SK-N-SH (cell line): ENCODE measurements at regions of chr9 and their contacts with region 1.

Region 1: GRCh38 chr9:129641746-129642513 is at the start of gene ASB6:
- DNase-seq: peak; percentile 99
- H3K4me3 ChIP-seq: peak within 1 kb of the TSS; percentile 99 to 100
- H3K27ac ChIP-seq: peak within 1 kb of the TSS; percentile 64 to 92
- H3K4me1 ChIP-seq: peaks cover 18 to 31% of the 10 kb centered on the region in 2 experiments
- H3K27me3 ChIP-seq: no peaks in the 10 kb centered on the region
- CTCF ChIP-seq: peak; percentile 87
- EP300 ChIP-seq: no peak; a peak in 1 of 4 replicates
- RAD21 ChIP-seq: peak; percentile 94
- polyA plus RNA-seq, gene ASB6: 35.9 and 37.5 TPM in 2 replicates

Region 2: GRCh38 chr9:129131300-129132145 is 510.4 kb before region 1 on chr9:
- CTCF ChIA-PET with region 1: interaction called, 14 read pairs
- POLR2A ChIA-PET with region 1: no interaction called
- DNase-seq: peak; percentile 91
- H3K4me3 ChIP-seq: no peak overlapping the region
- H3K27ac ChIP-seq: no peak overlapping the region
- H3K4me1 ChIP-seq: peaks cover 0 to 11% of the 10 kb centered on the region in 2 experiments; a peak in 1 of 4 replicates
- H3K27me3 ChIP-seq: no peaks in the 10 kb centered on the region
- CTCF ChIP-seq: peak; percentile 97
- EP300 ChIP-seq: no peak
- RAD21 ChIP-seq: peak; percentile 85

Region 3: DNA sequence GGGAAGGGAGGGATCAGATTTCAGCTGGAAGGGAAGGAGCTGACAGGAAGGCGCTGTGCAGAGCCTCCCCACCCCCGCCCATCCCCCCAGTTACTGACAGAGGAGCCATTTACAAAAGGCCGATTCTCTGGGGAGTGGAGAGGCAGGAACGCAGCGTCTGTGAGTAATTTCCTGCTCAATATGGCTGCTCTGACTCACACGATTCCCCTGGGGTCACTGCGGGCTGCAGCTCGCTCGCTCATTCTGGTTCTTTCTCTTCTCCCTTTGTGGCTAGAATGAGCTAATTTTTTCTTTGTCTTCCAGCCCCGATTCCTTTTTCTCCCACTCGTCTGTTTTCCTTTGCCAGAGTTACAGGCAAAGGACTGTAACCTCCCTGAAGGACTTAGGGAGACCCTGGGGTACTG is 501.9 kb before region 1 on chr9:
- CTCF ChIA-PET with region 1: interaction called, 10 read pairs
- POLR2A ChIA-PET with region 1: no interaction called
- DNase-seq: peak; percentile 75
- H3K4me3 ChIP-seq: peak overlapping the region; percentile 50 to 53
- H3K27ac ChIP-seq: peak overlapping the region; percentile 99 to 100
- H3K4me1 ChIP-seq: peaks cover 43 to 55% of the 10 kb centered on the region in 2 experiments; a peak in 3 of 4 replicates
- H3K27me3 ChIP-seq: no peaks in the 10 kb centered on the region
- CTCF ChIP-seq: no peak
- EP300 ChIP-seq: peak; percentile 61 to 96
- RAD21 ChIP-seq: peak; percentile 29

Region 4: DNA sequence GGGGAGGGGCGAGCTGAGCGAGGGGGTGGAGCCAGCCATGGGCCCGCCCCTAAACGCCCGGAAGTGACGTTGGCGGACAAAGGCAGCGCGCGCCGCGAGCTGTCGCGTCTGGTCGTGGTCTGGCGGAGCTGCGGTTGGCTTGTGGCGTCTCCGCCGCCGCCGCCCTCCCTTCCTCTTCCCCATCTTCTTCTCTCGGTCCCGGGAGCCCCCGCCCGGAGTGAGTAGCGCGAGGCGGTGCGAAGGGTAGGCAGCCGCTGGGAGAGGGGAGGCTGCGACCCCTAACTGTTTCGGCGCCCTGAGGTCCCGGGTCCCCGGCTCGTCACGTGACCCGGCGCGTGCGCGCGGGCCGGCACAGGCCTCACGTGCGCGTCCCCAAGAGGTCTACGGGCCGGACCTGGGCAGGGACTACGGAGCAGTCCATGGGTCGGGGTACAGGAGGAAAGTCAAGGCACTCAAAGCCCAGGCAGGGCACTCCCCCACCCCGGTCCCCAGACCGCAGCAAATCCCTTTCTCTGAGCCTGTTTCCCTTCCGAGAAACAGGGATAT is 15.8 kb before region 1 on chr9 and contains the start of gene NTMT1:
- CTCF ChIA-PET with region 1: interaction called, 76 read pairs
- POLR2A ChIA-PET with region 1: interaction called, 15 read pairs
- DNase-seq: peak; percentile 95
- H3K4me3 ChIP-seq: peak within 1 kb of the TSS; percentile 87 to 92
- H3K27ac ChIP-seq: peak within 1 kb of the TSS; percentile 78 to 83
- H3K4me1 ChIP-seq: peaks cover 16 to 29% of the 10 kb centered on the region in 2 experiments; a peak in 2 of 4 replicates
- H3K27me3 ChIP-seq: no peaks in the 10 kb centered on the region
- CTCF ChIP-seq: no peak
- EP300 ChIP-seq: no peak
- RAD21 ChIP-seq: no peak
- polyA plus RNA-seq, gene NTMT1: 75.0 and 78.3 TPM in 2 replicates

Region 5: DNA sequence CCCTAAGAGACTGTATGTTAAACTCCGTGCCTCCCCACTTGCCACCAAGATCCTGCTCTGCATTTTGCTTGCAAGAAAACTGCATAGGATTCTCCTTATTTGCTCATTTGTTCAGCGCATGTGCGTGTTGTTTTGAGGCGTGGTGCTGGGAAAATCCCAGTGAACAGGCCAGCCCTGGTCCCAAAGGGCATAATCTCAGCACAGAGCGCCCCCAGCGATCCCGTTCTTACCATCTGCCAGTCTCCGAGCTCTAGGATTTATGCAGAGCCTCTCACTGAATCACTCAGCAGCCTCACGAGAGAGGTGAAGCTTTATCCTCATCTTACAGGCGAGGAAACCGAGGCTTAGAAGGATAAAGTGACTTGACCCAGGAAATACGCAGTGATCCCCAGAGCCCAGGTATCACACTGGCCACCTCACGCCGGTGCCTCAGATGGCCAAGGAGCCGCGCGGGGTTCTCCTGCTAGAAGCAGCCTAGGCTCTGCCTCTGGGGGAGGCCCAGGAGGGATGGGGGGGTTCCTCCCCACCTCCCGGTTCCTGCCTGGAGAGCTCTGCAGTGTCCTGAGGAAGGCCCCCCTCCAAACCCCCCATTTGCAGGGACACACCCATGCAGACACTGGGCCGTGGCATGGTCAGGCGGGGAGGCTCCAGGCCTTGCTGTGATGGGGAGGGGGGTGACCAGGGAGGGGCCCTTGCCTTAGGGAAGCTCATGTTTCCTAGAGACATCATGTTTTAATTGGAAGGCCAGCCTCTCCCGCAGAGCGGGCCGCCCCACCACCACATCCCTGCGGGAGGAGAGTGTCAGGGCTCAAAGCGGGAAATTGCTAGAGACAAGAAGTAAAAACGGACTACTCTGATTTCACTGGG is 35.3 kb after region 1 on chr9:
- CTCF ChIA-PET with region 1: interaction called, 12 read pairs
- POLR2A ChIA-PET with region 1: interaction called, 3 read pairs
- DNase-seq: peak; percentile 84
- H3K4me3 ChIP-seq: no peak overlapping the region
- H3K27ac ChIP-seq: peak overlapping the region in 1 of 2 experiments; percentile 40; a peak in 2 of 4 replicates
- H3K4me1 ChIP-seq: peaks cover 0 to 42% of the 10 kb centered on the region in 2 experiments; a peak in 2 of 4 replicates
- H3K27me3 ChIP-seq: peaks cover 14% of the 10 kb centered on the region; the same call in 1 of the 2 replicates
- CTCF ChIP-seq: no peak
- EP300 ChIP-seq: no peak
- RAD21 ChIP-seq: no peak

Region 6: DNA sequence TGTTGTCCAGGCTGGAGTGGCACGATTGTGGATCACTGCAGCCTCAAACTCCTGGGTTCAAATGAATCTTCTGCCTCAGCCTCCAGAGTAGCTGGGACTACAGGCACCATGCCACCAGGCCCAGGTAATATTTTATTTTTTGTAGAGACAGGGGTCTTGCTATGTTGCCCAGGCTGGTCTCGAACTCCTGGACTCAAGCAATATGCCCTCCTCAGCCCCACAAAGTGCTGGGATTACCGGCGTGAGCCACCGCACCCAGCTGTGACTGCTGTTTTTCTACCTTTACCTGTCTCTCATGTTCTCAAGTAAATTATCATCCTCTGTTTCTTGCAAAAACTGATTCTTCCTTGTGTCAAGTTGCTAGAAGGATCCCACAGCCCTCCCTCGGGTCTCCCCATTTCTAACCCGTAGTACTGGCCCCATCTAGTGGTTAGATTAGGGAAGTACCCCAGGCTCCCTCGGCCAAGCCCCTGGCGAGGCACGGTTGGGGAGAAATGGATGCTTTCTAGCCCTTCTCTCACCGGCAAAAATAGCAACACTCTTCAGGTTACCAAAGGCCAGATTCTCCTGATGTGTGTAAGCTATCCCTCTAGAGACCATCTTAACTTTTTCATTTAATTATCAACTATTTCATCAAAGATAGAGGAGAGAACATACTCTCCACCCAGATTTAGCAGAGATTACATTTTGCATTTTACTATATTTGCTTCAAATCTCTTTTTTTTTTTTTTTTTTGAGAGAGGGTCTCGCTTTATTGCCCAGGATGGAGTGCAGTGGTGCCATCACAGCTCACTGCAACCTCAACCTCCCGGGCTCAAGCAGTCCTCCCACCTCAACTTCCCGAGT is 141.8 kb after region 1 on chr9:
- CTCF ChIA-PET with region 1: interaction called, 81 read pairs
- POLR2A ChIA-PET with region 1: interaction called, 4 read pairs
- DNase-seq: peak; percentile 91
- H3K4me3 ChIP-seq: no peak overlapping the region
- H3K27ac ChIP-seq: no peak overlapping the region
- H3K4me1 ChIP-seq: no peaks in the 10 kb centered on the region
- H3K27me3 ChIP-seq: no peaks in the 10 kb centered on the region; the same call in 1 of the 2 replicates
- CTCF ChIP-seq: peak; percentile 93
- EP300 ChIP-seq: no peak
- RAD21 ChIP-seq: peak; percentile 99

Region 7: DNA sequence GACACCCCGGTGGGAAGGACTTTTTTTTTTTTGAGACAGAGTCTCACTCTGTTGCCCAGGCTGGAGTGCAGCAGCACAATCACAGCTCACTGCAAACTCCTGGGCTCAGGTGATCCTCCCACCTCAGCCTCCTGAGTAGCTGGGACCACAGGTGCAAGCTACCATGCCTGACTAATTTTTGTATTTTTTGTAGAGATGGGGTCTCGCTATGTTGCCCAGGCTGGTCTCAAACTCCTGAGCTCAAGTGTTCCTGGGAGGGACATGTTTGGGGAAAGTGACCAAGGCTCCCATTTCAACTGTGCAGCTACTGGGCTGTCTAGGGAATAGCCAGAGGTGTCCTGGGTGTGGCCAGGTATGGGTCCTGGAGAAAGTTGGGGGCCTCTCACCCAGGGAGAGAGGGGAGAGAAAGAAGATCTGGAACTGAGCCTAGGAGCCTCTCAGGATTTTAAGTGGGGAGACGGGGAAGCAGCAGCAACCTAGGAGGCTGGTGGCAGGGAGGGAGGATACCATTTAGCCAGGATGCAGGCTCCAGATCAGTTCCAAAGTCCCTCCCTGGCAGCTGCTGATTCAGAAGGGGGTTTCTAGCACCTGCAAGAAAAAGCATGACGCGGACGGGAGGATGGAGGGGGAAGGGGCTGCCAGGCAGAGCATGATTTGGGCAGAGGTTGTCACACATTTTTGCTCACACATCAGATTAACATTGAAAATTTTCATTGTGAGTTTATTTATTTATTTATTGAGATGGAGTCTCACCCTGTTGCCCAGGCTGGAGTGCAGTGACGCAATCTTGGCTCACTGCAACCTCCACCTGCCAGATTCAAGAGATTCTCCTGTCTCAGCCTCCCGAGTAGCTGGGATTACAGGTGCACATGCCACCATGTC is 154.3 kb after region 1 on chr9:
- CTCF ChIA-PET with region 1: interaction called, 24 read pairs
- POLR2A ChIA-PET with region 1: no interaction called
- DNase-seq: no peak
- H3K4me3 ChIP-seq: no peak overlapping the region
- H3K27ac ChIP-seq: no peak overlapping the region
- H3K4me1 ChIP-seq: no peaks in the 10 kb centered on the region
- H3K27me3 ChIP-seq: no peaks in the 10 kb centered on the region; the same call in 1 of the 2 replicates
- CTCF ChIP-seq: no peak
- EP300 ChIP-seq: no peak
- RAD21 ChIP-seq: no peak